PC-9 (cell line): ENCODE measurements at regions of chr12 and their contacts with region 1.

Region 1: DNA sequence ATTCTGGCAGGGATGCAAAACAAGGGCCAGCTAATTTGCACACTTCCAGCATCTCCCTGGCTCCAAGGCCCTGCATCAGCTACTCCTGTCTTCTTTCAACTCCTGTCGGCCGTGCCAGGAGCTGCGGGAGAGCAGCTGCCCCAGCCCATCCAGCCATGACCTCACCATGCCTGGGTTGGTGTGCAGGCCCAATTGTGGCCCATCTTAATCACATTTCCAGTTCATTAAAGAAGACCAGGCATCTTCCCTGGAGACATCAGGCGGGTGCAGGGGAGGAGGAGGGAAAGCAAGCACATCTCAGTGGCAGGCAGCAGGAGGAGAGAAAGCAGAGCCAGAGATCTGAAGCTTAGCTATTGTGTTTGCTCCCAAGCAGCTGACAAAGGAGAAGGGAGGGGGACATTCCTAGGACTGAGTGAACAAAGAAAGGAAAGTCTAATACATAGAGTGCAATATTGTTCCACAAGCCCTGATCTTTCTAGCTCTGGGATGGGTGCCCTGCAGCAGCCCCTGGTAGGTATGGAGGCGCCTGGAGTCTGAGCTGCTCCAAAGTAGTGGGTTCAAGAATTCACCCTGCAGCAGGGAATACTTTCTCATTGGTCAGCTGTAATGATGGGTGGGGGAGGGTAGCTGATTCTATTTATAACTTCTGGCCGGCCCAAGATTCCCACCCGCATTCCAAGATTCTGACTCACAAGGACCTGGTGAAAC is 40.1 kb downstream of the VWF start:
- DNase-seq: peak; percentile 85 to 87
- H3K4me3 ChIP-seq: no peak overlapping the region
- H3K27ac ChIP-seq: peak overlapping the region; percentile 86
- H3K4me1 ChIP-seq: peaks cover 68% of the 10 kb centered on the region
- H3K27me3 ChIP-seq: no peaks in the 10 kb centered on the region
- CTCF ChIP-seq: no peak

Region 2: DNA sequence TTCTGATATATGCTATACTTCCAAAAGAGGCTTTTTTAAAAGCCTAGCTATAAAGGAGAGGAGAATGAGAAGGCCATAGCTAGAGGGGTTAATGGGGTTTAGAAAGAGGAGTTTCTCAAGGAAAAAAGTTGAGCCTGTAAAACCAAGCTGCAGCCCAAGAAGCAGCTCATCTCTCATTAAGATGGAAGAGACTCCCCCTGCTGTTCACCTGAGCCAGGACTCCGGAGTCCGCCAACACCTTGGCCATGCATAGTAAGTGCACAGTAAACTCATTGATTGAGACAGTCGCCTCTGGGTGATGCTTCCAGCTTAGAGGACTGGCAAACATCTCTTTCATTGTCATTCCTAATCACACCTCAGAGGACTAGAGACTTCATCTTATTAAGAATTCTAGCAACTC is 185.5 kb before region 1 on chr12:
- CTCF ChIA-PET with region 1: no interaction called
- POLR2A ChIA-PET with region 1: no interaction called
- intact Hi-C with region 1: no loop called
- DNase-seq: no peak
- H3K4me3 ChIP-seq: no peak overlapping the region
- H3K27ac ChIP-seq: no peak overlapping the region
- H3K4me1 ChIP-seq: no peaks in the 10 kb centered on the region
- H3K27me3 ChIP-seq: peaks cover 34% of the 10 kb centered on the region
- CTCF ChIP-seq: peak; percentile 48; the same call in 1 of the 2 replicates

Region 3: DNA sequence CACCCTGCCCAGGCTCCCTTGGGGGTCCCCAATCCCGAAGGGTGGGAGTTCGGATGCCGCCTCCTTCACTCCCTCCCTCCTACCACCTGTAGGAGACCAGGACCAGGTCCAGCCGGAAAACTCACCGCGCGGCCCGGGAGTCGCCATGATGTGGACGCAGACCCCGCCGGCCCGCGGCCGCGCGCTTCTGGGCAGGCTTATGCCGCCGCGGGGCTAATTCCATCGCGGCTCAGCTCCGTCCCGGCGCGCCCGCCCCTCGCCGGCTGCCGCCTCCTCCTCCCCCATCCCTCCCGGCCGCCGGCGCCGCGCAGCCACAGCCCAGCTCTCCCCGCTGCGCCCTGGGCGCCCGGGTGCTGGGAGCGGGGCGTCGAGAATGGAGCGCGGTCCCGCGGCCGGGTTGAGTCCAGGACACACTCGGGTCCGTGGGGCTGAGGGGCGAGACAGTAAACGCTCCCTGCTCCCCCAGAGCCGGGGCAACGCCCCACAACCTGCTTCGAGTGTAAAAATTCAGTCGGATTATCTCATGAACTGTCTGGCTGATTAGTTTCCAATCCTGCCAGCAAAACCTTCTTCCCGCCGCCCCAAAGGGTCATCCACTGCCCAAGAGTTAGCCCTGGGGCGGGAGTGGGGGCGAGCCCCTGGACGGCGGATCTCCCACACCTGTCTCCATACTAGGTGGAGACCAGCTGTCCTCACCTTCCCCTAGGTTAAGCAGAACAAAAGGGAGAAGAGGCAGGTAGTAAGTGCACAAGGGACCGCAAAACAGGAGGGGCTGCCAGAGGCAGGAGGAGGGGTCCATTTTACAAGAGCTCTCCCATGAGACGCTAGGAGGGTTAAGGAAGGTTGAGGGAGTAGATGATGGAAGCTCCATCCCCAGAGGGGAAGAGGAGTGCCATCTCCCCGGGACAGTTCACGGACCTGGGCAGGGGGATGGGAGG is 139.1 kb before region 1 on chr12 and contains the start of gene ANO2:
- CTCF ChIA-PET with region 1: no interaction called
- POLR2A ChIA-PET with region 1: no interaction called
- intact Hi-C with region 1: no loop called
- DNase-seq: peak in 1 of 2 experiments; percentile 29
- H3K4me3 ChIP-seq: no peak within 1 kb of the TSS
- H3K27ac ChIP-seq: no peak within 1 kb of the TSS
- H3K4me1 ChIP-seq: no peaks in the 10 kb centered on the region
- H3K27me3 ChIP-seq: peaks cover 100% of the 10 kb centered on the region
- CTCF ChIP-seq: no peak
- total RNA-seq, gene ANO2: not detected in 2 replicates

Region 4: DNA sequence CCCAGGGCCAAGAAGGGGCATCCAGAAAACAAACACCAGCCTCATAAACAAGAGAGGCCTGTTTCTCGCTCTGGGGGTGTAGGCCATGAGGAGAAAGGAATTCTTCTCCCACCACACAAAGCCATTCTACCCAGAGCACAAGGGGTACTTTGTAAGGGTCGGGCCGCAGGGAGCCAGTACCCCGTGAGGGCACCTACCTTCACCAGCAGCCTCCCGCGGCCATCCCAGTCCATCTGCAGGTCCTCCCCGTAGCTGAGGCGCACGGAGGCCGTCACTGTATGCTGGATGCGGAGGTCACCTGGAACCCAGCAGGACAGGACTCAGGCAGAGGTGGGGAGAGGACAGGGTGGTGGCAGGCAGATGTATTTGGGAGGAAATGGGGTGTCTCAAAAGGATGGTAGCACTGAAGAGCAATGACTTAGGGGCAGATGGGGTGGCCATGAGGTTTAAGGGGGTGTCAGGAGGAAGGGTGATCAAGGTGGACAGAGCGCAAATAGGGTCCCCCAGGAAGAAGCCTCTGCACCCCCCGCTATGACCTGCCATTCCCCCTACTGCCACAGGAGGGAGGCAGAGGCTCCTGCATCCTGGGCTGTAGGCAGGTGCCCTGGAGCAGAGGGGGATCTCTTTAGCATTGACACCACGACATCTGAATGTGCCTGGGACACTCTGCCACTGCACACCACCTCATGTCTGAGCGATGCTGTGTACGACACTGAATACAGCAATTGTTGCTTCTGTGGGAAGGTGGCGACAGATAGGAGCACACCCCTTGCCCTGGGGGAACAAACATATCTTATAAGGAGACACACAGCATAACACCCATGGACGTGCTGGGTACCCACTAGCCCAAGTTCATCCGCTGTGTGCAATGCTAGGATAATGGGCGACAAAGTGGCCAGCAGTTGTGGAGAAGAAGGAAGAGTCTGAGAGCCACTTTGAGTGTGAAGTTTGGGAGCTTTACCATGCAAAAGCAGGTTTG is 21.4 kb before region 1 on chr12:
- CTCF ChIA-PET with region 1: interaction called, 8 read pairs
- POLR2A ChIA-PET with region 1: no interaction called
- intact Hi-C with region 1: loop called (anchors 1 kb)
- DNase-seq: peak; percentile 48 to 80
- H3K4me3 ChIP-seq: no peak overlapping the region
- H3K27ac ChIP-seq: no peak overlapping the region
- H3K4me1 ChIP-seq: peaks cover 34% of the 10 kb centered on the region
- H3K27me3 ChIP-seq: no peaks in the 10 kb centered on the region
- CTCF ChIP-seq: peak; percentile 98

Region 5: DNA sequence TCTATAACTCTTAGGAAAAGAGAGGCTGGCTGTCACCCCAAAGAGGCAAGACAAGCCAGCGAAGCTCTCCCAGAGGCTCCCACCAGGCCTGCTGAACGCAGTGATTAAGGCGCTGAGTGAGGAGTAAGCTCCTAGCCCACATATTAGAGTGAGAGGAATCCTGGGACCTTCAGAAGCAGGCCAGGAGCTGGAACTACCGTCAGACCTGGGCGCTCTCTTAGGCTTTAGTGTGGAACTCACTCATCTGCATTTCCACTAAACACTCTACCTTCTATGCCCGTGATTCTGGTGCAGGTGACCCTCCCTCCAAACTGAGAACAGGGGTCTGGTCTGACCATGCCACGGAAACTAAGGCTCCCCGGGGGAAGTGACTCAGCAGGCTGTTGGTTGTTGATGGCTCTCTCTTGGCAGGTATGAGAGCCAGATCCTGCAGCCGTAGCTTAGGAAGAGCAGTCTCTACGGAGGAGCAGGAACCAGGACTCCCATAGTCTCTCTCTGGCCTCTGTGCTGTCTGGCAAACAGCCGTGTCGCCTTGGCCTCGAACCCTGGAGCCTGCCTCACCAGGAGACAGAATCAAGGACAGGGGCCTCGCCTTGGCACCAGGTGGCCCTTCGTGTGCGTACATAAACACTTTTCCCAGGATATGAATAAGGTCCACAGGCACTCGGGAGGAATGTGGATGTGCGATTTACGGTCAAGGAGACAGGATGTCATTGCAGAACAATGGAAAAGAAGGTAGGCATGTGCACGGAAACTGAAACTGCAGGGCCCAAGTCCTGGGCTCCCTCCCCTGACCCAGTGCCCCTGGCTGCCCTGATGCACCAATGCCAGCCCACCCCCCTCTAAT is 32.0 kb after region 1 on chr12:
- CTCF ChIA-PET with region 1: interaction called, 11 read pairs
- POLR2A ChIA-PET with region 1: interaction called, 8 read pairs
- intact Hi-C with region 1: no loop called
- DNase-seq: peak in 1 of 2 experiments; percentile 36
- H3K4me3 ChIP-seq: no peak overlapping the region
- H3K27ac ChIP-seq: no peak overlapping the region
- H3K4me1 ChIP-seq: peaks cover 9% of the 10 kb centered on the region; the same call in 1 of the 2 replicates
- H3K27me3 ChIP-seq: no peaks in the 10 kb centered on the region
- CTCF ChIP-seq: no peak

Region 6: DNA sequence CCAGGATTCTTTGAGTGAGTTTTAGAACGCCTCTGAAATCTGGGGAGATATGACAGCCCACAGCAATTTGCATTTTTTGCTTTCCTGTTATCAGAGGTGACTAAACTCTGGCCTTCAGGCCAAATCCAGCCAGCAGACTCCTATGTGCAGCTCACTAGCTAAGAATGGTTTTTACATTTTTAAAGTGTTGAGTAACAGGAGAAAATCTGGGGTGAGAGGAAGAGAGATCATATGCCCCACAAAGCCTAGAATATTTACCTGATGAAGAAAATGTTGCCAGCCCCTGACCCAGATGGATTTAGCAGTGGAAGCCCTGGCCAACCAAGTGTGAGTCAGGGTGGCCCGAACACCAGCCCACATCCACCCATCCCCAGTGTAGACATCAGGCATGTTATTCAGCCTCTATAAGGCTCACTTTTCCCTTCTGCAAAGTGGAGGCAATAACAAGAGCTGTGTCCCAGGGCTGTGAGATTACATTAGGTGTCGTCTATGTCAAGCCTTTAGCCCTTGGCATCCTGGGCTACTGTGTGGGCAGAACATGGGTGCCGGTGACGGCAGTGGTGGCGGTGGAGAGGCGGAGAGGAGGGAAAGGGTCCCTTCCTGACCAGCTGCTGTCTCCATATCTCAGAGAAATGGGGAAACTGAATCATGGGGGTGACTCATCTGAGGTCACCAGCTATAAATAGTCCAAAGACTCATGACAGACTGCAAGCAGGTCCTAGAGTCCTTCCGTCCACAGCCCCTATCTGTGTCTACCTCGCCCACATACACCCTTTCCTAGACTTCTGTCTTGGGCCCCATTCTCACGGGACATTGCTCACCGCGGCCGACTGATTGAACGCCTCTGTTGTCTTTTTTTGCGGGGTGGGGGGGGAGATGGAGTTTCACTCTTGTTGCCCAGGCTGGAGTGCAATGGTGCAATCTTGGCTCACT is 83.2 kb after region 1 on chr12:
- CTCF ChIA-PET with region 1: interaction called, 3 read pairs
- POLR2A ChIA-PET with region 1: interaction called, 3 read pairs
- intact Hi-C with region 1: loop called (anchors 2 kb)
- DNase-seq: peak; percentile 74 to 96
- H3K4me3 ChIP-seq: peak overlapping the region; percentile 31; the same call in 1 of the 2 replicates
- H3K27ac ChIP-seq: peak overlapping the region; percentile 97
- H3K4me1 ChIP-seq: peaks cover 35% of the 10 kb centered on the region
- H3K27me3 ChIP-seq: no peaks in the 10 kb centered on the region
- CTCF ChIP-seq: no peak

Region 7: GRCh38 chr12:6230321-6231110 is 146.1 kb after region 1 on chr12:
- CTCF ChIA-PET with region 1: no interaction called
- POLR2A ChIA-PET with region 1: interaction called, 10 read pairs
- intact Hi-C with region 1: no loop called
- DNase-seq: no peak
- H3K4me3 ChIP-seq: no peak overlapping the region
- H3K27ac ChIP-seq: peak overlapping the region; percentile 86
- H3K4me1 ChIP-seq: peaks cover 81% of the 10 kb centered on the region
- H3K27me3 ChIP-seq: no peaks in the 10 kb centered on the region
- CTCF ChIP-seq: no peak